Activated CD4-positive, alpha-beta memory T cell treated with anti-CD3 and anti-CD28 coated beads for 36 hours (primary cell): ENCODE measurements at regions of chr17 and their contacts with region 1.

Region 1: GRCh38 chr17:75182569-75183450 is at the start of gene SUMO2:
- DNase-seq: peak; percentile 97
- H3K4me3 Mint-ChIP-seq: peak within 1 kb of the TSS; percentile 91
- H3K27ac Mint-ChIP-seq: peak within 1 kb of the TSS; percentile 97
- H3K4me1 Mint-ChIP-seq: peaks cover 30% of the 10 kb centered on the region
- H3K27me3 Mint-ChIP-seq: no peaks in the 10 kb centered on the region
- total RNA-seq, gene SUMO2: 610 to 612 TPM

Region 2: DNA sequence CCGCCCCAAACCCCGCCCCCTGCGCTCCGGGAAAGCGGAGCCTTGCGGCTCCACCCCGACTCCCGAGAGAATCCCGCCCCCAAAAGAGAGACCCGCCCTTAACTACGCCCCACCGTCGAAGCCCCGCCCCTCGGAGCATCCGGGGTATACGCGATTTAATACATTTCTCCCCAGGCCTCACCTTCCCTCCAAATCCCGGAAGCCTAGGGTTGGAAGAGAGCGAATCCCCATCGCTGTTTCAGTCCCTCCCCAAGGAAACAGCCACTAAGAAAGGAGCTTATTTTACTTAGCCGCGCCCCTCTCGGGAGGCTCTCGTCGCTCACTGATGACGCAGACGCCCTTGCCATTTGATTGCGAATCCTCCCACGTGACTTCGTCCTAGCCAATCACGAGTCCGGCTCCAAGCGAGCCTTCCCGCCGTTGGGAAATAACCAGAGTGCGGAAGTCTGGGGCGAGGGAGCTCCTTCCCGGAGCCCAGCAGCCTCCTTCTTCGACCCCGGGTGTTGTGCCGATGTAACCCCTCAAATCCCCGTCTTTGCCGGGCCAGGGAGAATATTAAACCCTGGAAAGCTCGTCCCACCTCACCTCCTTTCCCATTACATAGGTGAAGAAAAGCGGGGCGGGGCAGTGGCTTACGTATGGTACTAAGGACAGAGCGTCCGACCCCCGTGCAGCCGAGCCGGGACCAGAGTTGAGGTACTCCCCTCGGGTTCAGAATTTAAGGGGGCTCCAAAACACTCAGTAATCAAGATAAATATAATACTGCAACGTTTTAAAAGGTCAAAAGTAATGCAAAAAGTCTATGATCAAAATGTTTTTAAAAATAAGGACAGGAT is 309.6 kb before region 1 on chr17:
- CTCF ChIA-PET with region 1: no interaction called
- POLR2A ChIA-PET with region 1: no interaction called
- intact Hi-C with region 1: loop called (anchors 5 kb)
- DNase-seq: peak; percentile 100
- H3K4me3 Mint-ChIP-seq: peak overlapping the region; percentile 80
- H3K27ac Mint-ChIP-seq: peak overlapping the region; percentile 93
- H3K4me1 Mint-ChIP-seq: peaks cover 25% of the 10 kb centered on the region
- H3K27me3 Mint-ChIP-seq: no peaks in the 10 kb centered on the region

Region 3: GRCh38 chr17:75034236-75034908 is 148.4 kb before region 1 on chr17:
- CTCF ChIA-PET with region 1: no interaction called
- POLR2A ChIA-PET with region 1: no interaction called
- intact Hi-C with region 1: loop called (anchors 5 kb)
- DNase-seq: peak; percentile 95
- H3K4me3 Mint-ChIP-seq: peak overlapping the region; percentile 97
- H3K27ac Mint-ChIP-seq: peak overlapping the region; percentile 96
- H3K4me1 Mint-ChIP-seq: peaks cover 49% of the 10 kb centered on the region
- H3K27me3 Mint-ChIP-seq: peaks cover 4% of the 10 kb centered on the region

Region 4: GRCh38 chr17:75046582-75047289 is 136.1 kb before region 1 on chr17 and contains the starts of genes ATP5PD and KCTD2:
- CTCF ChIA-PET with region 1: no interaction called
- POLR2A ChIA-PET with region 1: no interaction called
- intact Hi-C with region 1: loop called (anchors 5 kb)
- DNase-seq: peak; percentile 98
- H3K4me3 Mint-ChIP-seq: peak within 1 kb of the TSS; percentile 97
- H3K27ac Mint-ChIP-seq: peak within 1 kb of the TSS; percentile 91
- H3K4me1 Mint-ChIP-seq: peaks cover 42% of the 10 kb centered on the region
- H3K27me3 Mint-ChIP-seq: no peaks in the 10 kb centered on the region
- total RNA-seq, gene ATP5PD: 249 to 261 TPM
- total RNA-seq, gene KCTD2: 20.6 to 23.3 TPM

Region 5: GRCh38 chr17:75059369-75060345 is 123.2 kb before region 1 on chr17:
- CTCF ChIA-PET with region 1: no interaction called
- POLR2A ChIA-PET with region 1: no interaction called
- intact Hi-C with region 1: no loop called
- DNase-seq: no peak
- H3K4me3 Mint-ChIP-seq: no peak overlapping the region
- H3K27ac Mint-ChIP-seq: no peak overlapping the region
- H3K4me1 Mint-ChIP-seq: peaks cover 7% of the 10 kb centered on the region
- H3K27me3 Mint-ChIP-seq: no peaks in the 10 kb centered on the region

Region 6: DNA sequence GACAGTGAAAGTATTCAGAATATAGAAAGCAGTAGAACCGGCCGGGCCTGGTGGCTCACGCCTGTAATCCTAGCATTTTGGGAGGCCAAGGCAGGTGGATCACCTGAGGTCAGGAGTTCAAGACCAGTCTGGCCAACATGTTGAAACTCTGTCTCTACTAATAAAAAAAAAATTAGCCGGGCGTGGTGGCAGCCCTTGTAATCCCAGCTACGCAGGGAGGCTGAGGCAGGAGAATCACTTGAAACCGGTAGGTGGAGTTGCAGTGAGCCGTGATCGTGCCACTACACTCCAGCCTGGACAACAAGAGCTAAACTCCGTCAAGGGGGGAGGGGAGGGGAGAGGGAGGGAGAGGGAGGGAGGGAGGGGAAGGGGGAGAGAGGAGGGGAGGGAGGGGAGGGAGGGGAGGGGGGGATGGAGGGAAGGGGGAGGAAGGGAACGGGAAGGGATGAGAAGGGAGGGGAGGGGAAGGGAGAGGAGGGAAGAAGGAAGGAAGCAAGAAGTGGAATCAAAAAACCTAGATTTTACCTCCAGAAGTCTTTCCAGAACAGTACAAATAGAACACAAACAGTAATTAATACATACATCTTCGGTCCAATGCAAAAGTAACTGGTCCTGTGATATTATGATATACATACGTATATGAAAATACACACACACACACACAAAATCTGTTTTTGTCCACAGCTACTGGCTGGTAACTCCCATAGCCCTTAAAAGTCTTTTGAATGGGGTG is 40.4 kb before region 1 on chr17:
- CTCF ChIA-PET with region 1: no interaction called
- POLR2A ChIA-PET with region 1: no interaction called
- intact Hi-C with region 1: no loop called
- DNase-seq: no peak
- H3K4me3 Mint-ChIP-seq: no peak overlapping the region
- H3K27ac Mint-ChIP-seq: no peak overlapping the region
- H3K4me1 Mint-ChIP-seq: peaks cover 3% of the 10 kb centered on the region
- H3K27me3 Mint-ChIP-seq: no peaks in the 10 kb centered on the region

Region 7: GRCh38 chr17:75154195-75155106 is 28.4 kb before region 1 on chr17 and contains the start of gene JPT1:
- CTCF ChIA-PET with region 1: interaction called, 3 read pairs
- POLR2A ChIA-PET with region 1: no interaction called
- intact Hi-C with region 1: loop called (anchors 2 kb)
- DNase-seq: peak; percentile 99
- H3K4me3 Mint-ChIP-seq: peak within 1 kb of the TSS; percentile 95
- H3K27ac Mint-ChIP-seq: peak within 1 kb of the TSS; percentile 86
- H3K4me1 Mint-ChIP-seq: peaks cover 34% of the 10 kb centered on the region
- H3K27me3 Mint-ChIP-seq: no peaks in the 10 kb centered on the region
- total RNA-seq, gene JPT1: 263 to 267 TPM

Region 8: GRCh38 chr17:75205037-75205792 is 22.4 kb after region 1 on chr17 and contains the start of gene NUP85:
- CTCF ChIA-PET with region 1: interaction called, 8 read pairs
- POLR2A ChIA-PET with region 1: interaction called, 5 read pairs
- intact Hi-C with region 1: loop called (anchors 2 kb)
- DNase-seq: peak; percentile 95
- H3K4me3 Mint-ChIP-seq: peak within 1 kb of the TSS; percentile 81
- H3K27ac Mint-ChIP-seq: peak within 1 kb of the TSS; percentile 89
- H3K4me1 Mint-ChIP-seq: peaks cover 18% of the 10 kb centered on the region
- H3K27me3 Mint-ChIP-seq: no peaks in the 10 kb centered on the region
- total RNA-seq, gene NUP85: 125 to 132 TPM

Region 9: DNA sequence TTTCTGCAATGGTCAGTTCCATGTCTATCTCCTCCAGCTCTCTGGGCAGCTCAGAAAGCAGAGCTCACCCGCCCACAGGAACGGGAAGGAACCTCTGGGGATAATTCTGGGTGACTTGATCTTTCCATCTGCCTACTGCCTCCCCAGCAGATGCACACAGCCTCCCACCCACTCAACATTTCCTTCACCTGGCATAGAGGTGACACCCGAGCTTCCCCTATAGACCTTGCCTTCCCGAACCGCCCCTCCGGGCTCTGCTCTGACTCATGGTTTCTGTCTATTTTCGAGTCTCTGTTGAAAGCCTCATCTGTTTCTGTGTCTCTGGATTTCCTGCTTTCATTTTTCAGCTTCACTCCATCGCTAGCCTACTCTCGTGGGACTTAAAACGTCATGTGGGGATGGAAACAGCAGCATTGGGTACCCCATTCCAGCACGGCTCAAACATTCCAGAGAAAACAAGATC is 67.2 kb after region 1 on chr17:
- CTCF ChIA-PET with region 1: no interaction called
- POLR2A ChIA-PET with region 1: no interaction called
- intact Hi-C with region 1: no loop called
- DNase-seq: peak; percentile 91
- H3K4me3 Mint-ChIP-seq: peak overlapping the region; percentile 58
- H3K27ac Mint-ChIP-seq: peak overlapping the region; percentile 90
- H3K4me1 Mint-ChIP-seq: peaks cover 64% of the 10 kb centered on the region
- H3K27me3 Mint-ChIP-seq: no peaks in the 10 kb centered on the region